Ascending aorta (tissue), 2 donors: ENCODE measurements at regions of chr2 and their contacts with region 1.

Region 1: GRCh38 chr2:237858294-237859081 is 935 bp upstream of the RAMP1 start:
- DNase-seq: peak in 1 of 2 donors; percentile 89
- H3K4me3 ChIP-seq: peak overlapping the region; percentile 81 to 87
- H3K27ac ChIP-seq: peak overlapping the region; percentile 97 to 98
- H3K4me1 ChIP-seq: peaks cover 0 to 26% of the 10 kb centered on the region in 2 donors
- H3K27me3 ChIP-seq: no peaks in the 10 kb centered on the region
- CTCF ChIP-seq: peak; percentile 82 to 89 (median 85)

Region 2: DNA sequence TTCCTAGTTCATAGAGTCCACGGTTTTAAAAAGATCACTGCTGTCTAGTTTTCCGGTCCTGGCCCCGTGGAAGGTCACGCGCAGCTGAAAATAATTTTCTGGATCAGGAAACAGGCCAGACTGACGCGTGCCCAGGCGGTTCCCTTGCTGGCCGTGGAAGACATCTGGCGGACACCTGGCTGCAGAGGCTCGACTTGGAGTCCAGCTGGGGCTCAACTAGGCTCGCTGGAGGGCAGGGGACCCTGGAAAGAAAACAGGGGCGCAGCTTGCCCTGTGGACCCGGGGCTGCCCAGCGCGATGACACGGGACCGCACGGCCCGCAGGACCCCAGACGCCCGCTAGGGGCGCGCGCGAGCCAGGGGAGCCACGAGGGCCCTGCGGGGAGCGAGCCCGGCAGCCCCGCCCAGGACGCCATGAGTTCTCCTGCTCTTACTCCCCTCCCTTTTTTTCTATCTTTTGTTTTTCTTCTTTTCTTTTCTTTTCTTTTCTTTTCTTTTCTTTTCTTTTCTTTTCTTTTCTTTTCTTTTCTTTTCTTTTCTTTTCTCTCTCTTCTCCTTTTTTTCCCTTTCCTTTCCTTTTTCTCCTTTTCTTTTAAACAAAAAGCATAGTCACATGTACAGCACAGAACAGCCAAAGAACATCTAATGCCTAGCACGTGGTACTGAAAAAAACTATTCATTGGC is 65.1 kb after region 1 on chr2:
- intact Hi-C with region 1: loop called (anchors 1 kb)
- DNase-seq: peak in 1 of 2 donors; percentile 89
- H3K4me3 ChIP-seq: peak overlapping the region; percentile 16 to 48
- H3K27ac ChIP-seq: peak overlapping the region; percentile 91 to 94
- H3K4me1 ChIP-seq: peaks cover 5 to 26% of the 10 kb centered on the region in 2 donors
- H3K27me3 ChIP-seq: no peaks in the 10 kb centered on the region
- CTCF ChIP-seq: peak; percentile 99 to 100 (median 99)

Region 3: DNA sequence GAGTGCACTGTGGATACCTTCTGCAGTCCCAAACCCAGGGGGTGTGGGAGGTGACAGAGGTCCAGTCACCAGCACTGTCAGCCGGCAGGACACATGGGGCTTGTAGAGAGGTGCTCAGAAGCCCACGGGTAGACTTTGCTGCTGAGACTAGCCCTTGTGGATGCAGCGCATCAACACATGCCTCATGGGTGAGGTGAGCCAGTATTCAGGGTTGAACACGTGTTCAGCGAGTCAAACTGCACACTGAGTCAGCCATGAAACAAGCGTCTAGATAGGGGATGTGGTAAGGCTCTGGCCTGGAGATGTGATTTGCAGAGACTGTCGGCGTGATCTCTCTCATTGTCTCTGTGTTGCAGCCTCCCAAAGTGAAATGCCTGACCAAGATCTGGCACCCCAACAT is 166.5 kb after region 1 on chr2:
- intact Hi-C with region 1: loop called (anchors 5 kb)
- DNase-seq: no peak
- H3K4me3 ChIP-seq: no peak overlapping the region
- H3K27ac ChIP-seq: no peak overlapping the region
- H3K4me1 ChIP-seq: no peaks in the 10 kb centered on the region
- H3K27me3 ChIP-seq: no peaks in the 10 kb centered on the region
- CTCF ChIP-seq: no peak

Region 4: GRCh38 chr2:238139196-238140039 is 280.9 kb after region 1 on chr2:
- intact Hi-C with region 1: loop called (anchors 10 kb)
- DNase-seq: no peak
- H3K4me3 ChIP-seq: peak overlapping the region; percentile 54 to 65
- H3K27ac ChIP-seq: peak overlapping the region; percentile 75 to 80
- H3K4me1 ChIP-seq: peaks cover 19 to 52% of the 10 kb centered on the region in 2 donors
- H3K27me3 ChIP-seq: no peaks in the 10 kb centered on the region
- CTCF ChIP-seq: peak; percentile 47 to 69 (median 49)

Region 5: GRCh38 chr2:238263204-238264071 is 404.9 kb after region 1 on chr2:
- intact Hi-C with region 1: loop called (anchors 2 kb)
- DNase-seq: peak; percentile 63 to 97
- H3K4me3 ChIP-seq: no peak overlapping the region
- H3K27ac ChIP-seq: peak overlapping the region; percentile 37 to 51
- H3K4me1 ChIP-seq: peaks cover 0 to 6% of the 10 kb centered on the region in 2 donors
- H3K27me3 ChIP-seq: no peaks in the 10 kb centered on the region
- CTCF ChIP-seq: peak; percentile 75 to 90 (median 77)